Activated CD4-positive, alpha-beta memory T cell treated with anti-CD3 and anti-CD28 coated beads for 36 hours (primary cell): ENCODE measurements at regions of chr21 and their contacts with region 1.

Region 1: DNA sequence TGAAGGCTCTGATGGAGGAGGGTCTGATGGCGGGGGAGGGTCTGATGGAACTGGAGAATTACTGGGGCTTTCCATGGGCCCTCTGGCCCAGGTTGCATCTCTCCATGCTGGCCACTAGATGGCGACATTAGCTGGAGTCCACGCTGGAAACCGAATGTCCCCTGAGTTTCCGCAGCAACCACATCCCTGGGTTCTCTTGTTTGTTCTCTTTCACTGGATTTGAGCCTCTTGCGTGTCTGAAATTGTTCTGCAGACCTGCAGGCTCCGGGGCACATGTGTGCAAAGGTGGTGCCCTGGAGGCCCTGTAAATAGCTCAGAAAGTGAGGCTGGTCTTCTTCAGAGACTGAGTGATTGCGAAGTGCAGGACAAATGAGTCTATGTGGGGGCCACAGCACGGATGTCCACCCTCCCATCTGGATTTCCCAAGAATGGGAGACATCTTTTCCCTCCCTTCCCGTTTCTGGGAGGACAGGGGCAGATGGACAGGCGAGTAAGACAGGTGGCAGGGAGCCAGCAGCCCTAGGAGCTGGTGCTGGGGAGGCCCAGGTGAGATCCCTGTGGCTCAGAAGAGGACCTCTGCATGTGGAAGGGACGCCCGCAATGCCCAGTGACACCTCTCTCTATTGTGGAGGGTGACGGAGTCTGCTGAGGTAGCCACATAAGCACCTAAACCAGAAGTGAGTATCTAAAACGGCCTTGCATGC is 73.2 kb upstream of the ABCG1 start:
- DNase-seq: peak; percentile 75
- H3K4me3 Mint-ChIP-seq: no peak overlapping the region
- H3K27ac Mint-ChIP-seq: no peak overlapping the region
- H3K4me1 Mint-ChIP-seq: peaks cover 3% of the 10 kb centered on the region
- H3K27me3 Mint-ChIP-seq: no peaks in the 10 kb centered on the region

Region 2: DNA sequence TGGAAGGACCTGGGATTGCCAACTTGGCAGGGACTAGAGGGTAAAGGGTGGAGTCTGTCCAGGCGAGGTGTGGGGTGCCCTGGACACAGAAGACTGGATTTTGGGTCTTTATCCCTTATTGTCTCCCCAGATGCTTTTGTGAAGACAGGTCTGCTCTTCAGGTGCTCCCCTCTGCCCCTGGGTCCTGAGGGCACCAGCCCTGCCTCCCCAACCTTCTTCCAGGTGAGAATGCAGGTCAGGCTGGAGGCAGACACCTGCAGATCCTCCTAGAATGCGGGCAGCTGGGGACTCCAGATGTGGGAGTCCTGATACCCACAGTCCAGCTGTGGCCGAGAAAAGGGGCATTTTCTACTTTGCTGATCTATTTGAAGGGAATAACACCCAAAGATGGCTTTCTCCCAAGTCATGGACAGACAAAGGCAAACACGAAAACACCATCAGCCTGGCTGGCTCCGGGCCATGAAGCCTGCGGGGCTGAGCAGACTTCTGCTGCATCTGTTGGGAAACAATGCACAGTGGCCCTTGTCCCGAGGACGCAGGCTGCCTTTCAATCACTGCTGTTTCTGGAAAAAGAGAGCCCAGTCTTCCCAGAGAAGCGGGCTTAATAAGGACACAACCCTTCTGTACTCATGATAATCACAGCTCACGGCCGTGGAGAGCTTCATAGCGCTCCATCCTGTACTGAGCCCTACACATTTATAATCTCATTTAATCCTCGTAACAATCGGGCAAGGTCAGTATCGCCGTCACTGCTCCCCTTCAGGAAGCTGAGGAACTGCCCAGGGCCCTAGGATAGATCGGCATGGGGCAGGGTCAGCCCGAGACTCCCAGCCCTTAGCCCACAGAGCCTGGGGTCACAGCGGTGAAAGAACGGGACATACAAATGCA is 11.2 kb after region 1 on chr21:
- CTCF ChIA-PET with region 1: interaction called, 12 read pairs
- POLR2A ChIA-PET with region 1: no interaction called
- intact Hi-C with region 1: no loop called
- DNase-seq: peak; percentile 3
- H3K4me3 Mint-ChIP-seq: no peak overlapping the region
- H3K27ac Mint-ChIP-seq: no peak overlapping the region
- H3K4me1 Mint-ChIP-seq: peaks cover 9% of the 10 kb centered on the region
- H3K27me3 Mint-ChIP-seq: no peaks in the 10 kb centered on the region

Region 3: GRCh38 chr21:42309753-42310221 is 164.1 kb after region 1 on chr21:
- CTCF ChIA-PET with region 1: interaction called, 8 read pairs
- POLR2A ChIA-PET with region 1: no interaction called
- intact Hi-C with region 1: loop called (anchors 1 kb)
- DNase-seq: peak; percentile 83
- H3K4me3 Mint-ChIP-seq: no peak overlapping the region
- H3K27ac Mint-ChIP-seq: no peak overlapping the region
- H3K4me1 Mint-ChIP-seq: peaks cover 3% of the 10 kb centered on the region
- H3K27me3 Mint-ChIP-seq: peaks cover 5% of the 10 kb centered on the region